BJ (cell line): ENCODE measurements at regions of chr3 and their contacts with region 1.

Region 1: DNA sequence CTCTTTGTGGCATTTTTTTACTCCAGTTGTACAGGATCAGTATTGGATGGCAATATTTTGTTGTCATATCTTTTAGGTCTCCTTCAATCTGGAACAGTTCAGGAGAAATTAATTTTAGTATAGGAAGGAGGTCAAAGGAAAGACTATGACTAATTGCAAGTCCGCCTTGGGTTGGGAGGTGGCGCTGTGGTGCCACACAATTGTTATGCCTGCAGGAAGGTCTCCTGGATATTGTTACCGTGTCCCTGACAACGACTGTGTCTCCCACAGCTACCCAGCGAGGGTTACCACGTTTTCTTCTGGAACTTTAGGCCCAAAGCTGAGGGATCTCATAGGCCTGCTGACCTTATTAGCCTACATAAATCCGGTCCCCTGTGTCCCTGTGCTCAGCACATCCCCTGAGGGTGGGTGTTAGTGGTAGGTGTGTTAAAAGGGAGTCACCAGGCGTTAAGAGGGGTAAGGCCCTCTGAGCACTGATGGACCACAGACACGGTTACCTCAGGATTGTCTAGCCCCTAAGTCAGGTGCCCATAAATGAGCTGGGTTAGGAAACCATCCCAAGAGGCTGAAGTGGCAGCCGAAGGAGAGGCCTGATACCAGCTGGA is 31.5 kb downstream of the KCNAB1 start:
- DNase-seq: no peak
- H3K4me3 ChIP-seq: no peak overlapping the region
- H3K27me3 ChIP-seq: no peaks in the 10 kb centered on the region
- CTCF ChIP-seq: peak; percentile 82

Region 2: DNA sequence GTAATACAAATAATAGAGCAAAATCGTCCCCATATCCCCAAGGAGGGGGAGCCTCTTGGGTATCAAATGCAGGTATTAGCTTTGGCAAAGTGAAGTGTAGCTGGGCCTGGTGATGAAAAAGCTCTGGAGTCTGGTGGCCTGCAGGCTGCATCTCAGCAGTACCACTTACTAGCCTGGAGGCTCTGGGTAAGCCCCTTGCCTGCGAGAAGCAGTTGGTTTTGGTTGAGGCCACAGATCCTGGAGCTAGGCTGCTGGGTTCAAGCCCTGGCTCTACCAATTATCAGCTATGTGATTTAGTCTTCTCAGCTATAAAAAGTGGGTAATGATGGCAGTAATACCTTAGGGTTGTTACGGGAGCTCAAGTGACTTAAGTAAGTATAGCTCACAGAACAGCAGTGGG is 25.5 kb before region 1 on chr3:
- CTCF ChIA-PET with region 1: interaction called, 10 read pairs
- POLR2A ChIA-PET with region 1: no interaction called
- DNase-seq: no peak
- H3K4me3 ChIP-seq: no peak overlapping the region
- H3K27me3 ChIP-seq: 0 out of 2 replicates have a peak, but pooled peaks cover 1% of the 10 kb centered on the region
- CTCF ChIP-seq: no peak

Region 3: GRCh38 chr3:156382458-156383346 is 230.8 kb after region 1 on chr3:
- CTCF ChIA-PET with region 1: interaction called, 17 read pairs
- POLR2A ChIA-PET with region 1: no interaction called
- DNase-seq: no peak
- H3K4me3 ChIP-seq: no peak overlapping the region
- H3K27me3 ChIP-seq: no peaks in the 10 kb centered on the region; the same call in 1 of the 2 replicates
- CTCF ChIP-seq: peak; percentile 71

Region 4: GRCh38 chr3:156449712-156450574 is 298.0 kb after region 1 on chr3:
- CTCF ChIA-PET with region 1: interaction called, 53 read pairs
- POLR2A ChIA-PET with region 1: no interaction called
- DNase-seq: no peak
- H3K4me3 ChIP-seq: no peak overlapping the region
- H3K27me3 ChIP-seq: peaks cover 3% of the 10 kb centered on the region
- CTCF ChIP-seq: peak; percentile 61

Region 5: GRCh38 chr3:156509189-156510174 is 357.6 kb after region 1 on chr3:
- CTCF ChIA-PET with region 1: interaction called, 197 read pairs
- POLR2A ChIA-PET with region 1: no interaction called
- DNase-seq: no peak
- H3K4me3 ChIP-seq: no peak overlapping the region
- H3K27me3 ChIP-seq: peaks cover 3% of the 10 kb centered on the region
- CTCF ChIP-seq: peak; percentile 47

Region 6: GRCh38 chr3:157136647-157137387 is 984.9 kb after region 1 on chr3:
- CTCF ChIA-PET with region 1: interaction called, 35 read pairs
- POLR2A ChIA-PET with region 1: no interaction called
- DNase-seq: no peak
- H3K4me3 ChIP-seq: no peak overlapping the region
- H3K27me3 ChIP-seq: no peaks in the 10 kb centered on the region
- CTCF ChIP-seq: no peak